Heart right ventricle (tissue), 16 donors: ENCODE measurements at regions of chr1 and their contacts with region 1.

Region 1: DNA sequence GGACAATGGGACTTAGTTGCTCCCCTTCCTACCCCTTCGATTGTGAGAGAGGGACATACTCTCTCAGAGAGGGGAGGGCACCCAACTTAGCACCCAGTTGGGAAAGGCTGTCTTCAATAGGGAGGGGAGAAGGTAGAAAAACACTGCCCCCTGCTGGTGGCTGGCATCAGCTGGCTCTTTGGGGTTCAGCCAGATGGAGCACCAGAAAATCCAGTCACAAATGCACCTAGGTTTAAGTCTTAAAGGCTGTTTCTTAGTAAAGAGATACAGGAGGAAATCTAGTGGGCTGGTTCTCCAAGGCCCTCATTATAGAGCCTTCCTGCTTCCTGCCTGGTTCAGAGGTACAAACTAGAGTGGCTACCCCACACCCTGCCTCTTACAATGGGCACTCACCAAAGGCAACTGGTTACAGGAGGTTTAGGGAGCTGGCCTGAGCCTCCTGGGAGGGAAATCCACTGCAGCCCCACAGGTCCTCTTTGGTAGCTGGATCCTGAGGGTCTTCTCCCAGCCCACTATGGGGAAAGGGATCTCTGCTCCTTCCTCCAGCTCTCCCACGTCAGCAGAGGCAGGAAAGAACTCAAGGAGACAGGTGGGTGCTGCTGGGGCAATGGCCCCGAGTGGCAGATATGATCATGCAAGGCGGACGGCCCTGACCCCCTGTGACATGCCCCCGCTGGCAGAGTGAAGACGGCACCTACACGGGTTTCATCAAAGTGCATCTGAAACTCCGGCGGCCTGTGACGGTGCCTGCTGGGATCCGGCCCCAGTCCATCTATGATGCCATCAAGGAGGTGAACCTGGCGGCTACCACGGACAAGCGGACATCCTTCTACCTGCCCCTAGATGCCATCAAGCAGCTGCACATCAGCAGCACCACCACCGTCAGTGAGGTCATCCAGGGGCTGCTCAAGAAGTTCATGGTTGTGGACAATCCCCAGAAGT is 28.3 kb downstream of the EIF2D start:
- DNase-seq: peak; percentile 70 to 82
- ATAC-seq: peak; percentile 40 to 74 (median 56)
- H3K4me3 ChIP-seq: no peak overlapping the region
- H3K27ac ChIP-seq: peak overlapping the region in 1 of 10 donors; percentile 95
- H3K4me1 ChIP-seq: peaks cover 0 to 66% (median 15%) of the 10 kb centered on the region in 9 donors
- H3K27me3 ChIP-seq: no peaks in the 10 kb centered on the region
- CTCF ChIP-seq: peak; percentile 81 to 97 (median 93)

Region 2: GRCh38 chr1:206489980-206490770 is 93.8 kb before region 1 on chr1:
- intact Hi-C with region 1: loop called (anchors 1 to 5 kb)
- DNase-seq: peak; percentile 74 to 76
- ATAC-seq: peak; percentile 80 to 91 (median 84)
- H3K4me3 ChIP-seq: no peak overlapping the region
- H3K27ac ChIP-seq: no peak overlapping the region
- H3K4me1 ChIP-seq: peaks cover 0 to 26% (median 20%) of the 10 kb centered on the region in 9 donors
- H3K27me3 ChIP-seq: no peaks in the 10 kb centered on the region
- CTCF ChIP-seq: peak; percentile 85 to 98 (median 94)

Region 3: GRCh38 chr1:206496131-206496793 is 87.7 kb before region 1 on chr1:
- intact Hi-C with region 1: loop called in 7 of 10 experiments (anchors 1 to 5 kb)
- DNase-seq: peak in 1 of 2 donors; percentile 39
- ATAC-seq: peak in 4 of 8 donors; percentile 8 to 27 (median 18)
- H3K4me3 ChIP-seq: no peak overlapping the region
- H3K27ac ChIP-seq: peak overlapping the region in 3 of 10 donors; percentile 6 to 51 (median 16)
- H3K4me1 ChIP-seq: peaks cover 8 to 32% (median 26%) of the 10 kb centered on the region in 9 donors
- H3K27me3 ChIP-seq: no peaks in the 10 kb centered on the region
- CTCF ChIP-seq: no peak